ENCODE measurements at regions of chr7 and their contacts with region 1.

Region 1: DNA sequence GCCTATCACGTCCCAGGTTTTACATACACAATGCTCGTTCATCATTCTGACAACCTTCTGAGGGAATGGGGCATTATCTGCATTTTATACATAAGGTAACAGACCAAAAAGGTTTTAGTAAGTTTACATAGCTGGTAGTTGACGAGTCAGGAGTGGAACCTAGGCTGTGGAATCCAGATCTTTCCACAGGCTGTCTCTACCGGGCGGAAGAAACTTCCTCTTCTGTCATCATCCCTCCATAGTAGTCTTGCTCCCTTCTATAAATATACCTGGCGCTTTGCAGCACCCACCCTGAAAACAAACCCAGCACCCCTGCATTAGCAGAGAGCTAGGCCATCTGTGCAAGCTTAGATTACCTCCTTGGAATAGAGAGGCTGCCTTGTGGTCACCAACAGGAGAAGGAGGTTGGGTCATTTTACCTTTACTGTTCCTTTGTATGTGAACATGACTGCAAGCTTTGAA is 1.3 kb downstream of the TSPAN13 start:
- DNase-seq: no peak
- H3K4me3 ChIP-seq: peak overlapping the region; percentile 74
- CTCF ChIP-seq: no peak

Region 2: DNA sequence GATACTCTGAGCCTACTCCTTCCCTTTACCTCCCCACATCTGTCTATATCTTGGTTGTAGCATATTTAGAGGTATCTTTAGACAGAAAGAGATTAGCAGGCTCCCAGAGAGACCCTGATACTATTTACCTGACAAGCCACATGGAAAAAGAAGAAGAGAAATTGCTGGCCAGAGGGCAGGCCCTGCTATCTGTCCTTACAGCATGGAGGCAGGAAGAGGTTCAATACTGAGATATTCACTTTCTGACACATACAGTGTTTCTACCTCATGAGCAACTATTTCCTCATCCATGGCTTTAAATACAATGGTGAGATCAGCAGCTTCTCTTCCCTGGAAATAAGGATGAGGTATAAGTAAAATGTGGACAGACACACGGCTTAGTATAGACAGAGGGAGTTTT is 35.2 kb before region 1 on chr7:
- in situ Hi-C with region 1: loop called (anchors 5 kb)
- DNase-seq: no peak
- H3K4me3 ChIP-seq: no peak overlapping the region
- CTCF ChIP-seq: no peak